ENCODE measurements at regions of chr9 and their contacts with region 1.

Region 1: DNA sequence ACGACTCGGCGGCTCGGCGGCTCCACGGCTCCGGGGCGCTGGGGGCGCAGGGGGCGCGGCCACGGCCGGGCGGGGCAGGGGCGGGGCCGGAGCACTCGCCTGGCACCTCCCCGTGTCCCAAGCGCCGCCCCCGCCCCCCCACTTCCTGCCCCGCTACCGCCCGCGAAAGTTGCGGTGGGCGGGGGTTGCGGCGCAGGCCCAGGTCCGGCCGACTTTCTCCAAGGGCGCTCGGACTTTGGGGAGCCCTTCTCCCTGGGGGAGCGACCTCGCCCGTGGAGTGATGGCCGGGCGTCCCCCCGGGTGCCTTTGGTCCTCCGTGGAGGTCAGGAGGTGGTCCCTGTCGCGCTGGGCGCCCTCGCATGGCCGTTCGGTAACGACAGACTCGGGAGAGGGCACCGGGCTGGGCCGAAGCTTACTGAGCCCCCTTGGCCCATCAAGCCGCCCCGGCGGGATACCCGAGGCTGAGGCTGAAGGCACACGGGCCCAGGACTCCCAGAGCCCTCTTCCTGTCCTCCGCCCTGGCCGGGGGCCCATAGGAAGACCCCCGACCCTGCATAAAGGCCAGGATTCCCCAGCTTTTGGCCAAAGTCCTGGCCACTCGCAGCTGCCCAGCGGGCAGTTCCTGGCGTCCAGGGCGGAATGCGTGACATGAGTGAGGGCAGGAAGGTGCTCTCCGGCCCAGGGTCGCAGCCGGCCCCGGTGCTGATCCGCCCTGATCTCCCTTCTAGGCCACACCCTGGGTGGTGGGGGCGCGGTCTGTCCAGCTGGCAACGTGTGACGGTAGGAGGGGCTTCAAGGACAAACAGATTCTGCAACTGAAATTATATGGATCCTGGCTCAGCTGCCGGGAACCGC is 883 bp upstream of the VAV2 start:
- DNase-seq: peak; percentile 80
- ATAC-seq: peak; percentile 76
- H3K4me3 Mint-ChIP-seq: peak overlapping the region; percentile 76
- H3K27ac Mint-ChIP-seq: peak overlapping the region; percentile 65
- H3K4me1 Mint-ChIP-seq: peaks cover 39% of the 10 kb centered on the region
- H3K27me3 Mint-ChIP-seq: no peaks in the 10 kb centered on the region
- CTCF ChIP-seq: no peak

Region 2: DNA sequence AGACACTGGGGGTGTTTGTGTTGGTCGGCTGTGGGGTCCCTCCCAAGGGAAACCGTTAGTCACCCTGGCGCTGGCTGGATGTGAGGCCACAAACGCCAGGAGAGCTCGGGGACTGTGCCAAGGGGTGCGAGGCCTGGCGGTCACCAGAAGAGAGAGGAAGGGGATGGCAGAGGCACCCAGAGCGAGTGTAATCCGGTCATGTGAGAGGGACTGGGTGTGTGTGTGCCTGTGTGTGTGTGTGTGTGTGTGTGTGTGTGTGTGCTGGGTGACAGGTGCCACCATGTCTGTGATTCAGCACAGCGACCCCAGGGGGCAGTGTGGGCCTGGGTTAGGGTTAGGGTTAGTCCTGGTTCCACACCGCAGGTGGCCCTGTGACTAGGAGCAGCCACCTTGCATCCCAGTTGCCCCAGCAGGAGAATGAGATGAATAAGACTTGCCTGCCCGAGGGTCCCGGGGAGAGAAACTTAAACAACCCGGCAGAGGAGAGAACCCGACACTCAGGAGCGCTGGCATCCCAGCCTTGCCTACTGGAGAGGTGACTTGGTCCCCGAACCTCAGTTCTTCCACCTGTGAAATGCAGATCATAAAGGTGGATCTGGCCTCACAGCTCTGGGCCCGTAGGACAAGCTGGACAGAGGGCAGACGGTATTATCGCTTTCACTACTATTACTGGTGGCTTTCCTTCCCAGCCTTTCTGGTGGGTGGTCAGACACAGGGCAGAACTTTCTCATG is 459.9 kb before region 1 on chr9:
- CTCF ChIA-PET with region 1: interaction called, 10 read pairs
- POLR2A ChIA-PET with region 1: no interaction called
- intact Hi-C with region 1: loop called (anchors 1 kb)
- DNase-seq: peak; percentile 49
- ATAC-seq: peak; percentile 86
- H3K4me3 Mint-ChIP-seq: no peak overlapping the region
- H3K27ac Mint-ChIP-seq: no peak overlapping the region
- H3K4me1 Mint-ChIP-seq: peaks cover 11% of the 10 kb centered on the region
- H3K27me3 Mint-ChIP-seq: peaks cover 31% of the 10 kb centered on the region
- CTCF ChIP-seq: no peak

Region 3: GRCh38 chr9:133782157-133783130 is 210.6 kb before region 1 on chr9:
- CTCF ChIA-PET with region 1: interaction called, 220 read pairs
- POLR2A ChIA-PET with region 1: interaction called, 47 read pairs
- intact Hi-C with region 1: loop called (anchors 1 kb)
- DNase-seq: peak; percentile 60
- ATAC-seq: peak; percentile 35
- H3K4me3 Mint-ChIP-seq: peak overlapping the region; percentile 20
- H3K27ac Mint-ChIP-seq: peak overlapping the region; percentile 6
- H3K4me1 Mint-ChIP-seq: peaks cover 60% of the 10 kb centered on the region
- H3K27me3 Mint-ChIP-seq: no peaks in the 10 kb centered on the region
- CTCF ChIP-seq: peak; percentile 55

Region 4: DNA sequence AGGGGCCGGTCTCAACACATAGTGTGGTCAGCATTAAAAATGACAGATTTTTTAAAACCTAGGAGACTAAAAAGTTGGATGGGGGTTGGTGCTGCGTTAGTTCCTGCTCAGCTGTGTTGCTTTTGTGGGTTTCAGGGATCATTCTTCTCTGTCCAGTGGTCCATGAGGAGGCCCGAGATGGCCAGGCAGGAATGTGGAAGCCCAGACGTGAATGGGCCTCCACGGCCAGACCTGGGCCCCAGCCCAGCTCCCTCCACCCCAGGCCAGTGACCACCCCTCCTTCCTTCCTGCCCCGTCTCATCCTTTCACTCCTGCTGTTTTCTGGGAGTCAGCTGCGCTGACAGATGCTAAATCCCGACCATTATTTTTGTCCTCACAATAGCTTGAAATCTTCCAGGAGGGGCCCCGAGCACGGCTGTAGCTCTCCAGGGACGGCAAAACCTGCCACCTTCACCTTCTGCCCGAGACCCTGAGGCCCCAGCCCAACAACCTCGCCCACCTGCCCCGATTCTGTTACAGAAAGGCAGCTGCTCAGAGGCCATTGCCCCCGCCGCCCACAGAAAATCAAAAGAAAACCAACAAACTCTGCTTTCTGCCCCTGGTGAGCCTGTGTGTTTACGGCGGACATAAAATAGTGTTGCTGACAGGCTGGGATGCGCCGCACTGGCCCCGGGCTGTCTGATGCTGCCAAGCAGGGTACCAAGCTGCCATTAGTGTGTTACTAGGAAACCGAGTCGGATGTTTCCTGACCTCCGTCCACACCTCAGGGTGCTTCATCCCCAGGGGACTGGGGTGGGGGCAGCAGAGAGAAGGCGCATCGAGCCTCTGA is 171.2 kb before region 1 on chr9:
- CTCF ChIA-PET with region 1: interaction called, 8 read pairs
- POLR2A ChIA-PET with region 1: interaction called, 6 read pairs
- intact Hi-C with region 1: loop called (anchors 1 kb)
- DNase-seq: no peak
- ATAC-seq: peak; percentile 56
- H3K4me3 Mint-ChIP-seq: peak overlapping the region; percentile 81
- H3K27ac Mint-ChIP-seq: peak overlapping the region; percentile 97
- H3K4me1 Mint-ChIP-seq: peaks cover 81% of the 10 kb centered on the region
- H3K27me3 Mint-ChIP-seq: no peaks in the 10 kb centered on the region
- CTCF ChIP-seq: no peak

Region 5: DNA sequence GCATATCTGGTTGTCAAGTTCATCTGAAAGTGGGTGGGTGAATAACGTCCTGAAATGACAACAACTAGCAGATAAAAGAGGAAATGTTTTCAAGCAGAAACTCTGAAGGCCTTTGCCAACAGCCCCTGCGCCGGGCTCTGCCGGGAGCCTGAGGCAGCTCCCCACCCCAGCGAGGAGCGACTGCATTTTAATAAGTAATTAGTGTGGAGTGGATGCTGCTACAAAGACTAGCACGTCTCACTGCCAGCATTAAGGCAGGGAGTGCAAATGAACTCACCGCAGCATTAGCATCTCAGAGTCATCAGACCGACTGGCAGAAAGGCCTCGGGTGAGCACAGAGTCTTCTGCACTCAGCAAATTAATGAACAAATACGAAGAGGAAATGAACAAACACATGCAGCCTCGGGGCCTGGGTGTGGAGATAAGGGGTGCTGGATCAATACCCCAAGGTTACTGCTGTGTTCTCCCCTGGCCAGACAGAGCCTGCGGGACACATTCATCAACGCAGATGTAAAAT is 64.7 kb before region 1 on chr9:
- CTCF ChIA-PET with region 1: no interaction called
- POLR2A ChIA-PET with region 1: no interaction called
- intact Hi-C with region 1: loop called (anchors 5 kb)
- DNase-seq: no peak
- ATAC-seq: peak; percentile 67
- H3K4me3 Mint-ChIP-seq: peak overlapping the region; percentile 16
- H3K27ac Mint-ChIP-seq: peak overlapping the region; percentile 75
- H3K4me1 Mint-ChIP-seq: peaks cover 54% of the 10 kb centered on the region
- H3K27me3 Mint-ChIP-seq: no peaks in the 10 kb centered on the region
- CTCF ChIP-seq: no peak

Region 6: DNA sequence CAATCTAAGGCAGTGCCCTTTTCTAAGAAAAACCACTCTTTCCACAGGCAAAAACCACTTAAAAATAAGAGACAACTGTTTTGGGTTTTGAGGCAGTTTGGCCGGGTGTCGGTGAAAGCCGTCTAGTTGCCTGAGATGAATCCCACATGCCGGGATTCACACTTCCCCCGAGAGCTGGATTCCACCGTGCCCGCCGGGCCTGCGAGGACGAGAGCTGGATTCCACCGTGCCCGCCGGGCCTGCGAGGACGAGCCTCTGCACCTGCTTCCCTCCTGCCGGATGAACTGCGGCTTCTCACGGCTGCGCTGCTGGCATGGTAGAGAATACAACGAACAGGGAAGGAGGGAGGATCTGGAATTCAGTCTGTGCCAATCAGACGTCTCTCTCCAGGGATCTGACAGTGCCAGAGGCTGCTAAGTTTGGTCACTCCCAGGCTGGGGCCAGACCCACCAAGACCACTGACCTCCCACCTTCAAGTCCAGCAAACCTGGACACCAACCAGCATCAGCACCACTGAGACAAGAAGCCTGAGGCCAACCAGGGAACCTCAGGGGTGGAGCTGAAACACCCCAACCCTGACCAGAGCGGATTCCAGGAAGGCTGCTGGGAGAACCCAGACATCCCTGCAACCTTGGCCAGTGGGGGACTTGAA is 23.9 kb before region 1 on chr9:
- CTCF ChIA-PET with region 1: interaction called, 4 read pairs
- POLR2A ChIA-PET with region 1: no interaction called
- intact Hi-C with region 1: loop called (anchors 1 kb)
- DNase-seq: no peak
- ATAC-seq: no peak
- H3K4me3 Mint-ChIP-seq: peak overlapping the region; percentile 60
- H3K27ac Mint-ChIP-seq: no peak overlapping the region
- H3K4me1 Mint-ChIP-seq: peaks cover 90% of the 10 kb centered on the region
- H3K27me3 Mint-ChIP-seq: no peaks in the 10 kb centered on the region
- CTCF ChIP-seq: no peak

Region 7: GRCh38 chr9:134059661-134060395 is 66.8 kb after region 1 on chr9:
- CTCF ChIA-PET with region 1: no interaction called
- POLR2A ChIA-PET with region 1: no interaction called
- intact Hi-C with region 1: loop called (anchors 2 kb)
- DNase-seq: peak; percentile 52
- ATAC-seq: peak; percentile 96
- H3K4me3 Mint-ChIP-seq: peak overlapping the region; percentile 50
- H3K27ac Mint-ChIP-seq: no peak overlapping the region
- H3K4me1 Mint-ChIP-seq: peaks cover 61% of the 10 kb centered on the region
- H3K27me3 Mint-ChIP-seq: no peaks in the 10 kb centered on the region
- CTCF ChIP-seq: no peak

Region 8: GRCh38 chr9:134185536-134186011 is 192.6 kb after region 1 on chr9:
- CTCF ChIA-PET with region 1: no interaction called
- POLR2A ChIA-PET with region 1: no interaction called
- intact Hi-C with region 1: no loop called
- DNase-seq: no peak
- ATAC-seq: peak; percentile 25
- H3K4me3 Mint-ChIP-seq: no peak overlapping the region
- H3K27ac Mint-ChIP-seq: peak overlapping the region; percentile 5
- H3K4me1 Mint-ChIP-seq: peaks cover 13% of the 10 kb centered on the region
- H3K27me3 Mint-ChIP-seq: peaks cover 13% of the 10 kb centered on the region
- CTCF ChIP-seq: no peak